ENCODE measurements at regions of chr2 and their contacts with region 1.

Region 1: DNA sequence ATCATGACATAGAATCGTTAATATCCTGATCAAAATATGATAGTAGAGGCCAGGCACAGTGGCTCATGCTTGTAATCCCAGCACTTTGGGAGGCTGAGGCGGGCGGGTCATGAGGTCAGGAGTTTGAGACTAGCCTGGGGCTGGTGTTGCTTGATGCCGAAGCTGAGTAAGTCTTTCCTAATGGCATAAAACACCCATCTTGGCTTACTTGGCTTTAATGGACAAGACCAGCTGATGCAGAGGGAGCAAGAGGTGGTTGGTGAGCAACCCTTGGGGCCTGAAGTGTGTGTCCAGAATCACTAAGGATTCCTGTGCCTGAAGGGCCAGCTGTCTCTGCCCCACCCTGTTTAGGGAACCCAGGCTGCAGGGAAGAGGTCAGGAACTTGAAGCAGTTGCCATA is 217.3 kb downstream of the ARL4C start:
- DNase-seq: no peak
- ATAC-seq: no peak
- H3K4me3 ChIP-seq: no peak overlapping the region
- H3K27ac ChIP-seq: no peak overlapping the region
- H3K4me1 ChIP-seq: no peaks in the 10 kb centered on the region; a peak in 1 of 5 replicates
- H3K27me3 ChIP-seq: no peaks in the 10 kb centered on the region
- CTCF ChIP-seq: no peak
- EP300 ChIP-seq: no peak
- POLR2A ChIP-seq: no peak
- RAD21 ChIP-seq: no peak

Region 2: DNA sequence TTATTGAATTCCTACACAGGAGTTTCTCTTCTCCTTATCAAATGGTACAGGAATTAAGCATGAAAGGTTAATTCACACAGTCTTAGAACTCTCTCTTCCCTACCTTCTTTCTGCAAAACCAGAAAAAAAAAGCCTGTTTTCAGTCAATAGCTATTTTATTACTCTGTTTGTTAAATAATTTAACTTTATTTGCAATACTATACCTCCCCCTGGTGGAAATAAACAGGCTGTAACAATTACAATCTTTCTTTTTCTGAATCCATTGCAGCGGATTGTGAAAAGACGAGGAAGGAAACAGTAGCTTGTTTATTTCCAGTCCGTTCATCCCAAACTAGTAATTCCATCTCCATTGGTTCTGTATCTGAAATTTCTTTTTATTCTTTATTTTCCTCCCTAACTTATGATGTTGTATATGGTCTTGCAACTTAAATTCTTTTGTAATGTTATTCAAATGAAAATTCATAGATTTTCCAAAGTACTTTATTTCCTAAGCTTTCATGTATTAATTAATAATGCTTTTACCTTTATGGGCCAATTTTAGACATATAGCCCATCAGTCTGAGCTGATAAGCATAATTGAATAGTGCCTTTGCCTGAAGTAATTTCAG is 837.4 kb after region 1 on chr2:
- CTCF ChIA-PET with region 1: no interaction called
- POLR2A ChIA-PET with region 1: no interaction called
- in situ Hi-C with region 1: loop called (anchors 5 kb)
- intact Hi-C with region 1: no loop called
- DNase-seq: peak in 3 of 4 experiments; percentile 8 to 15 (median 10)
- ATAC-seq: no peak
- H3K4me3 ChIP-seq: no peak overlapping the region
- H3K27ac ChIP-seq: no peak overlapping the region
- H3K4me1 ChIP-seq: no peaks in the 10 kb centered on the region; a peak in 1 of 5 replicates
- H3K27me3 ChIP-seq: peaks cover 0 to 6% of the 10 kb centered on the region in 2 experiments; a peak in 2 of 5 replicates
- CTCF ChIP-seq: peak in 1 of 3 experiments; percentile 56; a peak in 3 of 6 replicates
- EP300 ChIP-seq: no peak
- POLR2A ChIP-seq: no peak
- RAD21 ChIP-seq: peak; percentile 48 to 66; a peak in 3 of 4 replicates